Dorsolateral prefrontal cortex (tissue), 120 donors: ENCODE measurements at regions of chr11 and their contacts with region 1.

Region 1: DNA sequence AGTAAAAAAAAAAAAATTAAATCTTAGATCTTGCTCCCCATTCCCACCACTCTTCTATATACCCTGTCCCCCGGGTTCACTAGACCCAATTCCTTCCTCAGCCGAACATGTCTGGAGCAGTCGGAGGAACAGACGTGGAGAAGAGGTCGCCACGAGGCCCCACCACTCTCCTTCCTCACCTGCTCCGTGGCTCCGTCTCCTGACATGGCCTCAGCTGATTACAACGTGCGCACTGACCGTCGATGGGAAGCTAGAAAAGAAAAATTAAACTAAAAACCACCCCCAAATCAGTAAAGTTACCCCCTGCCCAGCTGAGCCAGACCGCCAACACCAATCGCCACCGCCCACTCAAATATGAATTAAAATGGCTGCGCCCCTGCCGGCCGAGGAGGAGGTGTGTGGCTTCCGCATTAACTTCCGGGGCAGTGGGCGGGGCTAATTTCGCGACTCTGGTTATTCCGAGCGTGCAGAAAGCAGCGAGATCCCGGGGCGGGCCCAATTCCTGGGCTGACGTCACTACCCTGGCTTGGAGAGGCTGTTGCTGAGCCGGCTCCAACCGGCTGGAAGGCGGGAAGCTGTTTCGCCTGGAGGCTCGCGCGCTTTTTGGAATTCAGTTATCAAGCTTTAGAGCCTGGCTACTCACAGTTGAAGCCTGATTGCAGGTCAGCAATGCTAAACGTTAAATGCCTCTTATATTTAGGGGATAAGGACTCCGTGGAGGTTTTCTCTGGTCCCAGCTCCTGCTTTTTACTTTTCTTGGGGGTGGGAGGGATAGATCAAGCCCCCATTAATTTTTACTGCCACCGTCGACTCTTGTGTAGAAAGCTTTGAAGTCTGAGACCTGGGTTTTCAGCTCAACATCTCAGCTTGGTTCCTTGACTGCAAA is at the start of gene CSTF3:
- DNase-seq: peak; percentile 100
- H3K4me3 ChIP-seq: peak within 1 kb of the TSS; percentile 63 to 97 (median 86)
- H3K27ac ChIP-seq: peak within 1 kb of the TSS; percentile 41 to 95 (median 87)
- H3K27me3 ChIP-seq: no peaks in the 10 kb centered on the region
- CTCF ChIP-seq: peak in 55 of 56 donors; percentile 19 to 76 (median 58)
- total RNA-seq, gene CSTF3: 20.9 to 50.5 (median 35.5) TPM

Region 2: GRCh38 chr11:33329705-33330329 is 168.5 kb after region 1 on chr11:
- intact Hi-C with region 1: loop called (anchors 2 to 5 kb)
- DNase-seq: peak in 5 of 10 donors; percentile 20 to 63 (median 41)
- H3K4me3 ChIP-seq: no peak overlapping the region
- H3K27ac ChIP-seq: peak overlapping the region in 4 of 59 donors; percentile 1 to 15 (median 8)
- H3K27me3 ChIP-seq: no peaks in the 10 kb centered on the region
- CTCF ChIP-seq: peak in 55 of 56 donors; percentile 41 to 82 (median 68)